ENCODE measurements at regions of chr3 and their contacts with region 1.

Region 1: GRCh38 chr3:123652346-123652984 is 67.6 kb upstream of the HACD2 start:
- DNase-seq: peak; percentile 62
- ATAC-seq: peak; percentile 94
- H3K4me3 ChIP-seq: no peak overlapping the region
- H3K27ac ChIP-seq: peak overlapping the region; percentile 41
- H3K4me1 ChIP-seq: peaks cover 16% of the 10 kb centered on the region
- H3K27me3 ChIP-seq: no peaks in the 10 kb centered on the region
- CTCF ChIP-seq: peak; percentile 94
- EP300 ChIP-seq: no peak
- POLR2A ChIP-seq: no peak
- RAD21 ChIP-seq: peak; percentile 97

Region 2: DNA sequence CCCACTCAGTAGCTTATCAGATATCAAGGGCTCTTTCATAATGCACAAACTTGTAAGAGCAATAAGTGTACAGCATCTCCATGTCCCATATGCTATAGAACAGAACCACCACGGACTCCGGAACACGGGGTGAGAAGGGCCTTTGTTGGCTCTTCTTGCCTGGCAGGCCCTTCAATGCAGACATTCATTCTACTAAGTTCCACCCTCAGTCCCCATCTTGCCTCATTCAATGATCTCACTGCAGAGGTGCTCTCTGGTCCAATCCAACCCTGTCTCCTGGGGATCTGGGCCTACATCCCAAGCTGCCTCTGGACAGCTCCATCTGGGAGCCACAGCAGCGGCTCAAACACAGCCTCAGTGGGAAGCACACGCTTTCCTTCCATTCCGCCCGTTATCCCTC is 84.4 kb before region 1 on chr3:
- CTCF ChIA-PET with region 1: no interaction called
- POLR2A ChIA-PET with region 1: no interaction called
- in situ Hi-C with region 1: no loop called
- intact Hi-C with region 1: no loop called
- DNase-seq: no peak
- ATAC-seq: no peak
- H3K4me3 ChIP-seq: no peak overlapping the region
- H3K27ac ChIP-seq: no peak overlapping the region
- H3K4me1 ChIP-seq: no peaks in the 10 kb centered on the region
- H3K27me3 ChIP-seq: no peaks in the 10 kb centered on the region
- CTCF ChIP-seq: no peak
- EP300 ChIP-seq: no peak
- POLR2A ChIP-seq: no peak
- RAD21 ChIP-seq: no peak

Region 3: GRCh38 chr3:123632161-123632655 is 20.3 kb before region 1 on chr3:
- CTCF ChIA-PET with region 1: no interaction called
- POLR2A ChIA-PET with region 1: no interaction called
- in situ Hi-C with region 1: no loop called
- intact Hi-C with region 1: no loop called
- DNase-seq: no peak
- ATAC-seq: no peak
- H3K4me3 ChIP-seq: no peak overlapping the region
- H3K27ac ChIP-seq: no peak overlapping the region
- H3K4me1 ChIP-seq: peaks cover 40% of the 10 kb centered on the region
- H3K27me3 ChIP-seq: no peaks in the 10 kb centered on the region
- CTCF ChIP-seq: no peak
- EP300 ChIP-seq: no peak
- POLR2A ChIP-seq: no peak
- RAD21 ChIP-seq: no peak

Region 4: DNA sequence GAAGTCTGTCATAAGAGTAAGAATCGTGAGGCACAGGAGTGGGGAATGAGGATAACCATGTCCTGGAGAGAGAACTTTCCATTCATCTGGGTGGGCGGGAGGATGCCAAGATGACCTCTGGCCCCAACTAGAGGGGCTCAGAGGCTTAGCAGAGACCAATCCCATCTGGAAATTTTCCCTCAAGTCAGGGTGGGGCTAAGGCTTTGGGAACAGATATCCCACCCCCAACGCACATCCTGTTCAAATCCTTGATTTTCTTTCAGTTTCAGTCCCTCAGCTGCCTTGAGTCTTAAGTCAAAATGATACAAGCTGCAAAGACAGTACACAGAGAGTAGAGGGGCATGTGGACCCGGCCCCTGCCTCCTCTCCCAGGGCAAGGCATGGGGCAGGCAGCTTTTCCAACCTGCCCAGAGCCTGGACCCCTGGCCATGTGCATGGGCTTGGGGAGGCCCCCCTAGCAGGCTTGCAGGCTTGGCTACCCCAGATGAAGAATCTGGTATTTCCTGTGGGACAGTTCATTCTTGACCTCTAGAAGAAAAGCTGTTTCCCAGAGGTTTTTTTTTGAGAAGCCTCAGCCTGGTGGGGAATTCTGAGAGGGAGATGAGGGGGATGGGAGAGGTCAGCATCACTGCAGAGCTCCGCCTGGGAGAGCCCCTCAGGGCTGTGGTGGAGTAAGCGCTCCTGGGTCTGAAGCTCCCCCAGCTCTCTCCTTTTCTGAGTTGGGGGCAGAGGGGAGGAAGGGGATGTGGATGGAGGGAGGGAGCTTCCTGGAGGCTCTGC is 42.1 kb after region 1 on chr3:
- CTCF ChIA-PET with region 1: no interaction called
- POLR2A ChIA-PET with region 1: interaction called, 3 read pairs
- in situ Hi-C with region 1: loop called (anchors 5 kb)
- intact Hi-C with region 1: loop called (anchors 2 kb)
- DNase-seq: no peak
- ATAC-seq: no peak
- H3K4me3 ChIP-seq: no peak overlapping the region
- H3K27ac ChIP-seq: no peak overlapping the region
- H3K4me1 ChIP-seq: peaks cover 38% of the 10 kb centered on the region
- H3K27me3 ChIP-seq: no peaks in the 10 kb centered on the region
- CTCF ChIP-seq: no peak
- EP300 ChIP-seq: no peak
- POLR2A ChIP-seq: no peak
- RAD21 ChIP-seq: no peak

Region 5: GRCh38 chr3:123700791-123701722 is 48.6 kb after region 1 on chr3:
- CTCF ChIA-PET with region 1: interaction called, 55 read pairs
- POLR2A ChIA-PET with region 1: interaction called, 14 read pairs
- in situ Hi-C with region 1: loop called (anchors 5 kb)
- intact Hi-C with region 1: loop called (anchors 1 kb)
- DNase-seq: no peak
- ATAC-seq: no peak
- H3K4me3 ChIP-seq: no peak overlapping the region
- H3K27ac ChIP-seq: no peak overlapping the region
- H3K4me1 ChIP-seq: peaks cover 40% of the 10 kb centered on the region
- H3K27me3 ChIP-seq: no peaks in the 10 kb centered on the region
- CTCF ChIP-seq: no peak
- EP300 ChIP-seq: no peak
- POLR2A ChIP-seq: no peak
- RAD21 ChIP-seq: no peak

Region 6: DNA sequence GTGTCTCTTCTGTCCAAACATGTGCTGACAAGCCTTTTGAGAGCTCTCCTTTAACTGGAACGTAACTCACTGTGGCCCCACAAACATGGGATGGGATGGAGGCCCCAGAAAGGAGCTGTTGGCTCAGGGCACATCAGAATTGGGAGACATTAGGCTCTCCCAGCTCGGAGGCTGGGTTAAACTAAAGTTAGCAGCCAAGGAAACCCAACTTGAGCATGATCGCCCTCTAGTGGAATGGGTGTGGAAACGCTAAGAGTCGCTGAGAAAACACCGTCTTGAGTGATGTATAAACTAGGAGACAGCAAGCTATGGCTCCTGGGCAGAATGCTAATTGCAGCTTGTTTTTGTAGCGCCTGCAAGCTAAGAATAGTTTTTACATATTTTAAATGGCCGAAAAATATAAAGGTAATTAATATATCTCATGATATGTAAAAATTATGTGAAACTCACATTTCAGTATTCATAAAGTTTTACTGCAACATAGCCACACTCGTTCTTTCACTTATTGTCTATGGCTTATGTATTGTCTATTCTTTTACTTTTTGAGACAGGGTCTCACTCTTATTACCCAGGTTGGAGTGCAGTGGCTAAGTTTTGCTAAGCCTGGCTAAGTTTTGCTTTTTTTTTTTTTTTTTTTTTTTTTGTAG is 71.2 kb after region 1 on chr3:
- CTCF ChIA-PET with region 1: interaction called, 32 read pairs
- POLR2A ChIA-PET with region 1: no interaction called
- in situ Hi-C with region 1: no loop called
- intact Hi-C with region 1: loop called (anchors 1 kb)
- DNase-seq: peak; percentile 62
- ATAC-seq: peak; percentile 63
- H3K4me3 ChIP-seq: no peak overlapping the region
- H3K27ac ChIP-seq: no peak overlapping the region
- H3K4me1 ChIP-seq: no peaks in the 10 kb centered on the region
- H3K27me3 ChIP-seq: no peaks in the 10 kb centered on the region
- CTCF ChIP-seq: peak; percentile 80
- EP300 ChIP-seq: no peak
- POLR2A ChIP-seq: no peak
- RAD21 ChIP-seq: peak; percentile 65

Region 7: GRCh38 chr3:125137352-125138033 is 1485.0 kb after region 1 on chr3:
- CTCF ChIA-PET with region 1: no interaction called
- POLR2A ChIA-PET with region 1: no interaction called
- in situ Hi-C with region 1: no loop called
- intact Hi-C with region 1: no loop called
- DNase-seq: no peak
- ATAC-seq: no peak
- H3K4me3 ChIP-seq: no peak overlapping the region
- H3K27ac ChIP-seq: no peak overlapping the region
- H3K4me1 ChIP-seq: no peaks in the 10 kb centered on the region
- H3K27me3 ChIP-seq: peaks cover 0 to 17% of the 10 kb centered on the region in 2 experiments; a peak in 1 of 5 replicates
- CTCF ChIP-seq: no peak
- EP300 ChIP-seq: no peak
- POLR2A ChIP-seq: no peak
- RAD21 ChIP-seq: no peak